ENCODE measurements at regions of chr7 and their contacts with region 1.

Region 1: DNA sequence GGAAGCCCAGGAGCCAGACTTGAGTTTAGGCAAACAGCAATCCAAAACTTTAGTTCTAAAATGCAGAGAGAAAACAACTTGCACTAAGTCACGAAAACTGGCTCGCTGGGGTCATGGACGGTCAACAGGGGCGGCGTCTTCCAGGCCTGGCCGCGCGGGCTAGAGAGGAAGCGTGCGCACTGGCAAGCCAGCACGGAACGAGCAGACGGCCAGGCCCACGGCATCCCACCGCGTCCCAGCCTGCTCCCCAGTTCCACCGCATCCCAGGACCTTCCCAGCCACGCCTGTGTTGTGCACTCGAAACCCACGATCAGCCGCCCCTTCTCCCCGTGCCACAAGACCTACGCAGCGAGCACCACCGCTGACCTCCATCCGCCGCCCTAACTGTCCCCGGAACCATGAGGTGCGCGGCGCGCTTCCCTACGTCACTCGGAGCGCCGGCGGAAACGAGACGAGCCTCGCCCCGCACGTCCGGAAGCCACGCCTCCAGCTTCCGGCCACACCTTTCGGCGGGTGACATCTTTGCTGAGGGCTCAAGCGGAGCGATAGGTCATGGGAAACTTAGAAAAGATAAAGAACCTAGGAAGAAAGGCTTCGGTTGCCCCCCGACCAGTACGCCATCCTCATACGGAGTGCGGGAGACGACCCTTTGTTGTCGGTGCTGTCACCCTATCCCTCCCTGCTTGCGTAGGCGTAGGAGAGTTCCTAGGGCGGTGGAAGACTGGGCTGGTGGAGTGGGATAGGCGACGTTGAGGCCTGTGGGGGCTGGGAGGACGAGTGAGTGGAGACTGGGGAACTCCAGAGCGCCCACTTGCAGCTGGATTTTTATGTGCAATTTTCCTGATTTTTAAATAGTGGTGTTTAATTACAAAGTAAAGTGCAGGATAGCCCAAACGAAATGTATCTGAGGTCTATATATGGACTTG is at the start of gene TBRG4:
- DNase-seq: peak; percentile 85 to 96 (median 94)
- H3K4me3 ChIP-seq: peak within 1 kb of the TSS; percentile 51 to 100 (median 92)
- H3K27ac ChIP-seq: peak within 1 kb of the TSS; percentile 77 to 100 (median 95)
- H3K27me3 ChIP-seq: no peaks in the 10 kb centered on the region
- CTCF ChIP-seq: peak in 55 of 56 donors; percentile 24 to 79 (median 60)
- total RNA-seq, gene TBRG4: 39.3 to 66.1 (median 52.5) TPM

Region 2: GRCh38 chr7:44581879-44582603 is 529.5 kb before region 1 on chr7 and contains the start of gene TMED4:
- intact Hi-C with region 1: loop called in 1 of 2 experiments (anchors 10 kb)
- DNase-seq: peak; percentile 98 to 99 (median 98)
- H3K4me3 ChIP-seq: peak within 1 kb of the TSS; percentile 65 to 100 (median 98)
- H3K27ac ChIP-seq: peak within 1 kb of the TSS; percentile 87 to 100 (median 98)
- H3K27me3 ChIP-seq: no peaks in the 10 kb centered on the region
- CTCF ChIP-seq: peak in 23 of 56 donors; percentile 3 to 51 (median 19)
- total RNA-seq, gene TMED4: 53.4 to 91.7 (median 69.9) TPM

Region 3: DNA sequence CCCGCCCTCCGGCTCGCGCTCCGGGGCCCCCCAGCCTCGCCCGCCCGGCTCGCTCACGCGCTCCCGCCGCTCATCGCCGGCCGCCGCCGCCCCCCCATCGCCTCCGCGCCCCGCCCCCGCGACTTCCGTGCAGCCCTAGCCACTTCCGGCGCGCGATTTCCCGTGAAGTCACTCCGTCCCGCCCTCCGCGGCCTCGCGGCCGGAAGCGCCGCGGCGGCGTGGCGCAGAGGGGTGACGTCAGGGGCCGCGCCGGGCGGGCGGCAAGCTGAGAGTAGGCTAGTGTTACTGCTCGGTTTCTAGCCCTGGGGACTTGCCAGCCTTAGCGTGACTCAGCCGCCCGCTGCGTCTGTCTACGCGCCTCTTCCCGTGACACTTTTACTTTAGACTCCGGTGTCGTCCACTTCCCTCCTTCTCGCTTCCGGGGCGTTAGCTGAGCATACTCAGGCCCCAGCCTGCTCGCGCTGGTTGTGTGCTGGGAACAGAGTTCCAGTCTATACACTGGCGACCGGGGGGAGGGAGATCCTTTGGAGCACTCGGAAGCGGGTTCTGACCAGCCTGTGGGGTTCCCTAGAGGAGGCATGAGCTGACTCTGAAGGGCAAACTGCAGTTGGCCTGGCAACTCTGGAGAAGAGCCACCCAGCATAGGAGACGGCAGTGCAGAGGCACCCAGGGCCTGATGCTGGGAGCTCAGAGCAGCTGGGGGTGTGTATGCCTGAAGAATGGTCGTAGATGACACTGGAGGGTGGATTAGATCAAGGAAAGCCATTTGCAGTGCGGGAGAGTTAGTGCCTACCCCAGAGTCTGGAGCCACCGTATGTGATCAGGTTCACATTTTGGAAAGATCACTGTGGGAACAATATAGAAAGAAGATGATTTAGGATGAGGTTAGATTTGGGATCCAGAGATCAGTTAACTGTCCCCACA is 225.9 kb before region 1 on chr7 and contains the start of gene PURB:
- intact Hi-C with region 1: loop called in 1 of 2 experiments (anchors 2 kb)
- DNase-seq: peak; percentile 88 to 97 (median 94)
- H3K4me3 ChIP-seq: peak within 1 kb of the TSS; percentile 70 to 100 (median 94)
- H3K27ac ChIP-seq: peak within 1 kb of the TSS; percentile 82 to 99 (median 97)
- H3K27me3 ChIP-seq: no peaks in the 10 kb centered on the region
- CTCF ChIP-seq: peak in 11 of 56 donors; percentile 6 to 33 (median 22)
- total RNA-seq, gene PURB: 28.0 to 55.6 (median 40.5) TPM

Region 4: GRCh38 chr7:44986218-44987053 is 125.1 kb before region 1 on chr7:
- intact Hi-C with region 1: loop called in 1 of 2 experiments (anchors 1 kb)
- DNase-seq: peak; percentile 79 to 96 (median 90)
- H3K4me3 ChIP-seq: peak overlapping the region; percentile 49 to 95 (median 74)
- H3K27ac ChIP-seq: peak overlapping the region; percentile 63 to 97 (median 93)
- H3K27me3 ChIP-seq: no peaks in the 10 kb centered on the region
- CTCF ChIP-seq: peak in 11 of 56 donors; percentile 1 to 23 (median 10)

Region 5: DNA sequence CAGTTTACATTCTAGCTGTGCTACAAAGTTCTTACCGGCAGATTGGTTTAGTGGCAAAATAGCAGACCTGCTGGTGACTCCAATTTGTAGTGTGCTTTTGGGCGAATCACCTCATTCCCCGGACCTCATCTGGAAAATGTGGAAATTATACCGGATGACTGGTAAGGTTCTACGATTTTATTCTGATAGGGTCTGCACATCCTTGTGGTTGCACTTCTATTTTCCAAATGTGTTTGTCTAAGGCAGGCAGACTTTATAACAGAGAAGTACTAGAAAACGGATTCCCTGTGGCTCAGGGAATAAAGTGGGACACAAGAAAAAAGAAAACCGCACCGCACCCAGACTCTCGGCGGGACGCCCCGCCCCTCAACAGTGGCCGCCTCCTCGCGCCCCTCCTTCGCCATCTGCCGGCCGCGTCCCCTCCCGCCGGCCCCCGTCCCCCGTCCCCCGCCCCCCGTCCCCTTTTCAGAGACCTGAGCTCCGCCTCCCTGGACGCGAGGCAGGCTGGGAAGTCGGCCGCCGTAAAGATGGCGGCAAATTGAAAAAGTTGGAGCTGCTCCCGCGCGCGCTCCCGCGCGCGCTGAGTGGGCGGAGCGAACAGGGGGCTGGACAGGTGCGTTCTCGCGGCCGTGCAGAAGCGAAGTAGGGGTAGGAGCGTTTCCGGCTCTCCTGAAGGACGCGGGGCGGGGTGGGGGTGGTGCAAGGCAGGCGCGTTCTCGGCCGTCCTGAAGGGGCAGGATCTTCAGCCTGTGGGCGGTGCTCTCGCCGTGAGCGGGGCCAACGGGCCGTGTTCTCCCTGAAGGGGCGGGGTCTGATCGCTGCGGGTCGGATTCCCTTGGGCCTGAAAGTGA is 112.1 kb before region 1 on chr7:
- intact Hi-C with region 1: loop called in 1 of 2 experiments (anchors 1 kb)
- DNase-seq: peak; percentile 95 to 100 (median 99)
- H3K4me3 ChIP-seq: peak overlapping the region; percentile 48 to 92 (median 75)
- H3K27ac ChIP-seq: peak overlapping the region; percentile 41 to 94 (median 85)
- H3K27me3 ChIP-seq: no peaks in the 10 kb centered on the region
- CTCF ChIP-seq: peak in 37 of 56 donors; percentile 4 to 57 (median 30)

Region 6: GRCh38 chr7:45080265-45080962 is 31.1 kb before region 1 on chr7:
- intact Hi-C with region 1: loop called in 1 of 2 experiments (anchors 5 kb)
- DNase-seq: peak in 1 of 10 donors; percentile 7
- H3K4me3 ChIP-seq: no peak overlapping the region
- H3K27ac ChIP-seq: peak overlapping the region in 26 of 59 donors; percentile 4 to 90 (median 80)
- H3K27me3 ChIP-seq: no peaks in the 10 kb centered on the region
- CTCF ChIP-seq: no peak

Region 7: GRCh38 chr7:45089341-45089891 is 22.1 kb before region 1 on chr7:
- intact Hi-C with region 1: loop called (anchors 1 kb)
- DNase-seq: peak; percentile 94 to 98 (median 98)
- H3K4me3 ChIP-seq: peak overlapping the region; percentile 62 to 96 (median 87)
- H3K27ac ChIP-seq: peak overlapping the region; percentile 30 to 100 (median 98)
- H3K27me3 ChIP-seq: no peaks in the 10 kb centered on the region
- CTCF ChIP-seq: peak in 15 of 56 donors; percentile 8 to 37 (median 27)

Region 8: GRCh38 chr7:45196374-45196773 is 84.8 kb after region 1 on chr7:
- intact Hi-C with region 1: no loop called
- DNase-seq: peak in 3 of 10 donors; percentile 18 to 31 (median 19)
- H3K4me3 ChIP-seq: no peak overlapping the region
- H3K27ac ChIP-seq: no peak overlapping the region
- H3K27me3 ChIP-seq: no peaks in the 10 kb centered on the region
- CTCF ChIP-seq: no peak

Measured in dorsolateral prefrontal cortex (tissue), 120 donors.